Natural killer cell (primary cell): ENCODE measurements at regions of chr6 and their contacts with region 1.

Region 1: DNA sequence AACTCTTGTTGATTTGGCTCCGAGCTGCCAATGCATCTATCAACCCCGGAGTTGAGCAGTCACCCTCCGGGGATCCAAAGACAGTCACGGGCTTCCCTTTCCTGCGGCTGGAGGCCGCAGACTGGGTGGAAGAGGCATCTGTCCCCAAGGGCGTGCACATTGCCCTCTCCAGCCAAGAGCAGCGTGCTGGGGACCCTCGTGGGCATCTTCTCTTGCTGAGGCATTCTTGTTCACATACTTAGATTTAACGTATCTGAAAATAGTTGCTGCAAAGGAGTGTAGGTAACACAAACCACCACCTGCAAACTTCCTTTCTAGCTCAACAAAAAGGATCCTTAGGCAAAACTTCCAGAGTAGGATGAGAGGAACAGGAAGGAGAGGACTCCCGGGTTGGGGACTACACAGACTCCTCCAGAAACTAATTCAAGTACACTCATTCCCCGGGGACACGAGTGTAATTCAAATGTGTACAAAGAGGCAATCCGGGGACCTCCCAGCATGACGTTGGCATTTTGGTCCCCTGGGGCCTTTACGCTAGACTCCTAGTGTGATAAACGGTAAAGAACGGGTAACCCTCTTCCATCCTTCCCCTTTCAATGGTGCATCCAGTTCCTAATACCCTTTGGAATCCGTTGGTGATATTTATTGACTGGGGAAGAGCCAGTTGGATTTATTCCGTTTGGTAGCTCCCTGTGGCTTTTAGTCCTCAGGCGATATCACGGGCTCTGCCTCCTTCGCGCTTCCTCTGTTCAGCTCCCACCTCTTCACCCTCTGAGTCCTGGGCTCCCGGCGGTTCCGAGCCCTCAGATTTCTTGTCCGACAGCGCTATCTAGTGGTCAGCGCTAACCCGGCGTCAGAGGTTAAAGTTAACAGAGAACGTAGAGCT is 2.7 kb upstream of the COL12A1 start:
- DNase-seq: peak; percentile 66 to 89
- ATAC-seq: peak; percentile 88 to 92 (median 90)
- H3K4me3 ChIP-seq: no peak overlapping the region
- H3K4me3 Mint-ChIP-seq: peak overlapping the region; percentile 84
- H3K27ac ChIP-seq: no peak overlapping the region
- H3K27ac Mint-ChIP-seq: peak overlapping the region; percentile 39 to 56
- H3K4me1 ChIP-seq: peaks cover 50% of the 10 kb centered on the region
- H3K4me1 Mint-ChIP-seq: peaks cover 37 to 48% of the 10 kb centered on the region in 2 donors
- H3K27me3 ChIP-seq: peaks cover 45% of the 10 kb centered on the region
- H3K27me3 Mint-ChIP-seq: peaks cover 67 to 85% of the 10 kb centered on the region in 2 donors
- CTCF ChIP-seq: peak; percentile 70

Region 2: GRCh38 chr6:73675466-73676098 is 1533.0 kb before region 1 on chr6:
- intact Hi-C with region 1: loop called (anchors 1 kb)
- DNase-seq: peak; percentile 43 to 80
- ATAC-seq: peak; percentile 89 to 94 (median 92)
- H3K4me3 ChIP-seq: no peak overlapping the region
- H3K4me3 Mint-ChIP-seq: no peak overlapping the region
- H3K27ac ChIP-seq: no peak overlapping the region
- H3K27ac Mint-ChIP-seq: no peak overlapping the region
- H3K4me1 ChIP-seq: peaks cover 2% of the 10 kb centered on the region
- H3K4me1 Mint-ChIP-seq: peaks cover 5% of the 10 kb centered on the region in 2 donors
- H3K27me3 ChIP-seq: no peaks in the 10 kb centered on the region
- H3K27me3 Mint-ChIP-seq: peaks cover 3 to 11% of the 10 kb centered on the region in 2 donors
- CTCF ChIP-seq: peak; percentile 85

Region 3: GRCh38 chr6:73739096-73739495 is 1469.4 kb before region 1 on chr6:
- intact Hi-C with region 1: loop called (anchors 1 kb)
- DNase-seq: peak in 1 of 2 donors; percentile 81
- ATAC-seq: peak; percentile 57 to 66 (median 65)
- H3K4me3 ChIP-seq: no peak overlapping the region
- H3K4me3 Mint-ChIP-seq: no peak overlapping the region
- H3K27ac ChIP-seq: no peak overlapping the region
- H3K27ac Mint-ChIP-seq: no peak overlapping the region
- H3K4me1 ChIP-seq: no peaks in the 10 kb centered on the region
- H3K4me1 Mint-ChIP-seq: no peaks in the 10 kb centered on the region
- H3K27me3 ChIP-seq: no peaks in the 10 kb centered on the region
- H3K27me3 Mint-ChIP-seq: no peaks in the 10 kb centered on the region
- CTCF ChIP-seq: peak; percentile 80

Region 4: GRCh38 chr6:73854998-73855718 is 1353.4 kb before region 1 on chr6:
- intact Hi-C with region 1: loop called (anchors 2 kb)
- DNase-seq: peak in 1 of 2 donors; percentile 71
- ATAC-seq: peak; percentile 46 to 67 (median 59)
- H3K4me3 ChIP-seq: no peak overlapping the region
- H3K4me3 Mint-ChIP-seq: no peak overlapping the region
- H3K27ac ChIP-seq: no peak overlapping the region
- H3K27ac Mint-ChIP-seq: no peak overlapping the region
- H3K4me1 ChIP-seq: no peaks in the 10 kb centered on the region
- H3K4me1 Mint-ChIP-seq: peaks cover 0 to 5% of the 10 kb centered on the region in 2 donors
- H3K27me3 ChIP-seq: no peaks in the 10 kb centered on the region
- H3K27me3 Mint-ChIP-seq: peaks cover 0 to 3% of the 10 kb centered on the region in 2 donors
- CTCF ChIP-seq: peak; percentile 75